BJ (cell line): ENCODE measurements at regions of chr22 and their contacts with region 1.

Region 1: GRCh38 chr22:35739076-35739930 is 21.6 kb downstream of the APOL5 start:
- DNase-seq: no peak
- H3K4me3 ChIP-seq: no peak overlapping the region
- H3K27me3 ChIP-seq: no peaks in the 10 kb centered on the region
- CTCF ChIP-seq: 0 out of 2 replicates have a peak, but pooled peaks have one; percentile 21

Region 2: GRCh38 chr22:35719212-35719869 is 20.0 kb before region 1 on chr22:
- CTCF ChIA-PET with region 1: no interaction called
- POLR2A ChIA-PET with region 1: no interaction called
- DNase-seq: no peak
- H3K4me3 ChIP-seq: no peak overlapping the region
- H3K27me3 ChIP-seq: no peaks in the 10 kb centered on the region
- CTCF ChIP-seq: no peak

Region 3: DNA sequence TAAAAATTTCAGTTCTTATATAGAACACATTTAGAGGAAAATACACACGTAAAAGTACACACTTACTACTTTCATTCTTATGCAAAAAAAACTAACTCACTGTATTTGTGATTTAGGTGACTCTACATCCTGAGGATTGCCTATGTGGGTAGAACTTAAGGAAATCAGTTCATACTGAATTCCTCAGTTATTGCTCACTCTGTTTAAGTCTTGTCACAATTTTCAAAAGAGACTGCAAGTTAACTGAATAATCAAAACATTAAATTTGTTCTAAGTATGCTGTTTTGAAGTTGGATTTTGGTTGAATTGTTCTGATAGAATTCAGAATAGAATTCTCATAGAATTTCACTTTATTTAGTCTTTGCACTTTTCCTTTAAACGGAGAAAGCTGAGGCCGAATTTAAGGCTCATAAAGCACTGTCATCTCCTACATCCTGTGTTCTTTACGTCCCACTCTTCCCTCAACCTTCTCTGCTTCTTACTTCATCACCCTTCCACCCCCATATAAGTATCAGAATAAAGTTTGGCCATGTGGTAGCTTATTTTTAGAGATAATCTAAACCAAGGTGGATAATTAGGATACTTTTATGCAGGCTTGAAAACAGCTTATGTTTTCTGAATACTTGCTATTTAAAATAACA is 38.2 kb after region 1 on chr22:
- CTCF ChIA-PET with region 1: no interaction called
- POLR2A ChIA-PET with region 1: no interaction called
- DNase-seq: no peak
- H3K4me3 ChIP-seq: no peak overlapping the region
- H3K27me3 ChIP-seq: no peaks in the 10 kb centered on the region
- CTCF ChIP-seq: no peak

Region 4: DNA sequence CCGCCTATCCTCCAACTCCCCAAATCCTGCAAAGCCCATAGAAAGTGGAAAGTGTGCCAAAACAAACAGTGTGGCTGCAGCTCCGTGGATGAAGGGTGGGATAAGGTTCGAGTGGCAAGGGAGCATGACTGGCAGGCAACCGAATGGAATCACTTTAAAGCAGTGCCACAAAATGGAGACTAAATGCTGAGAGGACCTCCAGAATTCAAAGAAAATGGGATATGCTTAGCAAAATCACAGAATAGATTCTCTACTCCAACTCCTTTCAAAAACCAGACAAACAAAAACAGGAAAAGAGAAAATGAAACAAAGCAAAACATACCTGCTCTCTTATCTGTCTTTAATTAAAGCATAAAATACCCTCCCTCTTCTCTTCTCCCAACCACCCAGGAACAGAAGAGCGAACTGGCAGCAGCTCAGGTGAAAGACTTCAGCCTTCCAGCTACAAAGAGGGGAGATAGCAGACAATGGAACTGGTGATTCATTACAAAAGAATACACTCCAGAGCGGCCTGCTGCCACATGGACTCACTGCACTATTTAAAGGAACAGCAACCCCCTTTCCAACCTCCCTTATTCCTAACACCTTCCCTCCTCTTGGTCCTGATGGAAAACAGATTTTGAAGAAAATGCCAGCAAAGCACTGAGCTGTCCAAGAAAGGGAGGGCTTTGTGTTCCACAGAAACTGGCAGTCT is 96.8 kb after region 1 on chr22:
- CTCF ChIA-PET with region 1: interaction called, 4 read pairs
- POLR2A ChIA-PET with region 1: interaction called, 12 read pairs
- DNase-seq: peak; percentile 72
- H3K4me3 ChIP-seq: peak overlapping the region; percentile 71
- H3K27me3 ChIP-seq: no peaks in the 10 kb centered on the region
- CTCF ChIP-seq: no peak